IMR-90 (cell line): ENCODE measurements at regions of chr17 and their contacts with region 1.

Region 1: DNA sequence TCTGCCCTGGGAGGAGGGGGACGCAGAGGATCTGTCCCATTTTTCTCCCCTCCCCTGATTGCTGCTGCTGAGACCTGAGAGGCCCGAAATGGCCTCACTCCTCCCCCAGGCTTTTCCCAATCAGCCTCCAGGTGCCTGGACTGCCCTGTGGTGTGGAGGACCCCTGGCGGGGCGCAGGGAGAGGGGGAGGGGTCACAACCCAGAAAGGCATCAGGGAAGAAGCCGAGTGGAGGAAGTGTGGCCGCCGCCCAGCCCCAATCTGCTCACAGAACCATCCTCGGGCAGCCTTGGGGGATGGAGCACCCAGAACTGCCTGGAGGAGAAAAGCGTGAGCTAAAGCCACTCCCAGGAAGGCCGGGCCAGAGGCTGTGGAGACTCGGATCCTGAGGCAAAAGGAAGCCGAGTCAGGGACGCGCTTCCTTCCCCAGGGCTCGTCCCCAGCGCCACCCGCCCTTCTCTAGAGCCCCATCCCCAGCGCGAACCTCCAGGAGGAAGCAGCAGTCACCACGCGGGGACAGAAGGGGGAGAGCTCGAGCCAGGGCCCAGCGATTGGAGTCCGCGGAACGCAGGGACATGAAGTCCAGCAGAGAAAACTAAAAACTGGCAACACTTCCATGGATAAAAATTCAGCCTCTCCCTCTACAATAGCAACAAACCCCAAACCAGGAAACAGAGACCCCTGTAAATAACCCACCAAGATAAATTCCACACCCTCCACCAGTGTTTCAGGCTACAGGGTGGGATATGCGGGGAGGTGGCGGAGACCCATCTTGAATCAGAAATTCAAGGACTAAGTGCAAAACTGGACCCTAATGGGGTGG is 116.3 kb upstream of the METRNL start:
- DNase-seq: peak; percentile 77
- ATAC-seq: peak; percentile 96
- H3K4me3 ChIP-seq: no peak overlapping the region
- H3K27ac ChIP-seq: no peak overlapping the region
- H3K4me1 ChIP-seq: peaks cover 4% of the 10 kb centered on the region
- H3K27me3 ChIP-seq: no peaks in the 10 kb centered on the region
- CTCF ChIP-seq: peak; percentile 95
- POLR2A ChIP-seq: no peak
- RAD21 ChIP-seq: peak; percentile 92

Region 2: GRCh38 chr17:83079352-83079747 is 116.3 kb after region 1 on chr17 and contains the start of gene METRNL:
- CTCF ChIA-PET with region 1: interaction called, 4 read pairs
- POLR2A ChIA-PET with region 1: no interaction called
- dilution Hi-C with region 1: no loop called
- in situ Hi-C with region 1: no loop called
- intact Hi-C with region 1: loop called (anchors 1 kb)
- DNase-seq: peak; percentile 50
- ATAC-seq: peak; percentile 63
- H3K4me3 ChIP-seq: peak within 1 kb of the TSS; percentile 67
- H3K27ac ChIP-seq: peak within 1 kb of the TSS; percentile 49
- H3K4me1 ChIP-seq: peaks cover 27% of the 10 kb centered on the region
- H3K27me3 ChIP-seq: peaks cover 9% of the 10 kb centered on the region; the same call in 1 of the 2 replicates
- CTCF ChIP-seq: no peak
- POLR2A ChIP-seq: peak; percentile 94
- RAD21 ChIP-seq: no peak
- total RNA-seq, gene METRNL: 17.9 and 21.4 TPM in 2 replicates

Region 3: GRCh38 chr17:83109793-83110645 is 146.9 kb after region 1 on chr17:
- CTCF ChIA-PET with region 1: no interaction called
- POLR2A ChIA-PET with region 1: no interaction called
- dilution Hi-C with region 1: no loop called
- in situ Hi-C with region 1: no loop called
- intact Hi-C with region 1: loop called (anchors 2 kb)
- DNase-seq: peak; percentile 97
- ATAC-seq: peak; percentile 87
- H3K4me3 ChIP-seq: peak overlapping the region; percentile 5; the same call in 1 of the 2 replicates
- H3K27ac ChIP-seq: peak overlapping the region; percentile 89
- H3K4me1 ChIP-seq: peaks cover 27% of the 10 kb centered on the region
- H3K27me3 ChIP-seq: no peaks in the 10 kb centered on the region; the same call in 1 of the 2 replicates
- CTCF ChIP-seq: no peak
- POLR2A ChIP-seq: peak; percentile 43; the same call in 1 of the 2 replicates
- RAD21 ChIP-seq: peak; percentile 26; the same call in 1 of the 2 replicates